ENCODE measurements at regions of chr6 and their contacts with region 1.

Region 1: GRCh38 chr6:92354270-92354831 is 1065.0 kb downstream of the EPHA7 start:
- DNase-seq: no peak

Region 2: DNA sequence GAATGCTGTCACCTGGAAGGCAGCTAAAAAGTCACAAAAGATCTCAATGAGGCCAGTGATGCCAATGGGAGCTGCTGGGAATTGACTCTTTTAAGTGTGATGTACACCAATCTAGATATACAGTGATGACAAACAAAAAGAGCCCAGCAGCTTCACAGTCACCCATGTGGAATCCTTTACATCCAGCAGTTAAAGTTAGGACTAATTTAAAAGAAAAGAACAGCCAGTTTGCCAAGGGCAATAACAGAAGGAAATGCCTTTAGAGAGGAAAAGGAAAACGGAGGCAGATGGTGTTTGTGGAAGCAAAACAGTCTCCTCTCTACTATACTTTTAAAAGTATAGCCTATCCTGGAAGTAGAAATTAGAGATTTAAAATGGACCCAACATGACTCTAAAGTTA is 191.5 kb after region 1 on chr6:
- CTCF ChIA-PET with region 1: interaction called, 10 read pairs
- POLR2A ChIA-PET with region 1: no interaction called
- DNase-seq: no peak

Measured in HEK293T (cell line).